ENCODE measurements at regions of chr9 and their contacts with region 1.

Region 1: DNA sequence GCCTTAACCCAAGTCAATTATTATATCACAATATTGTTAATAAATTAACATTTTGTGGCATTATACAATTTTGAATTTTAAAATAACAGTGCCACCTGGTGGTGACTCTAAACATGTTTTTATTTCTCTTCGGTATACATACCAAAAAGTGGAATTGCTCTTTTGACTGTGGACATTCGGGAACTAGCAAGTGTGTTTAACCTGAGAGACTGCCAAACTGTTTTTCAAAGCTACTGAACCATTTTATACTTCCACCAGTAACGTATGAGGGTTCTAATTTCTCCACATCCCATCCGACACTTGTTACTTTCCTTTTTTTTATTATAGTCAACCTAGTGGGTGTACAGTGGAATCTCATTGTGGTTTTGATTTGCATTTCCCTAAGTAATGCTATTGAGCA is 18.3 kb upstream of the HSDL2 start:
- H3K4me3 ChIP-seq: no peak overlapping the region
- H3K27ac ChIP-seq: no peak overlapping the region
- H3K4me1 ChIP-seq: no peaks in the 10 kb centered on the region
- CTCF ChIP-seq: no peak

Region 2: DNA sequence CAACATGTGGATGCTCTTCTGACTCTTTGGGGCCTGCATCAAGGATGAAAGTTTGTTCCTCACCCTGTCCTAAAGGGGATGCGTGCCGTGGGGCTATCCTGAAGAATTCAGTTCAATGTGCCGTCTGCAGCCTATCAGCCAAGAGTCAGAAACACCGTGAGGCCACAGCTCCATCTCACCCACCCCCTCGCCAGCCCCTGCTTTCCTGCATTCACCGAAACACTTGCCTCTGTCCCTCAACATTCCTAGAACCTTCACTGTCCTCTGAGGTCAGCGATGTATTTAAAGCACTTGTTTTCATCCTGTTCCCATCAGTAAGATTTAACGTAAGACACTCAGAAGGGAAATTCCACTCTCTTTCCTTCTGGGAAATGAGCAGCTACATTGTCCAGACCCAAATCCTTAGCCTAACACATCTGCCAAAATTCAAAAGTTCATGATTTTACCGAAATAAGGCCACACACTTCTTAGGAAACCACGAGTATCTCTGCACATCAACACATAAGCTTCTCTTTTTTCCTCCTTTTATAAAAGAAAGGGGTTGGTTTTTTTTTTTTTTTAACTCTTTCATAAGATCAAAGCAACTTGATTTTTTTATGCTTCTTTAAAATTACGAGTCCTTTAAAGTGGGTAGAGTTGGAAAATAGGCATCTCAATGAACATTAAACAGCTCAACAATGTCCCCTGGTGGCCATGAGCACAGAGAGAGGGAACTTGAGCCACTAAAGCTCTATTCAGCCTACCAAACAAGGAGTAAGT is 287.2 kb before region 1 on chr9:
- CTCF ChIA-PET with region 1: interaction called, 23 read pairs
- POLR2A ChIA-PET with region 1: no interaction called
- H3K4me3 ChIP-seq: no peak overlapping the region
- H3K27ac ChIP-seq: no peak overlapping the region
- H3K4me1 ChIP-seq: no peaks in the 10 kb centered on the region
- CTCF ChIP-seq: peak; percentile 34; the same call in 1 of the 2 replicates

Region 3: DNA sequence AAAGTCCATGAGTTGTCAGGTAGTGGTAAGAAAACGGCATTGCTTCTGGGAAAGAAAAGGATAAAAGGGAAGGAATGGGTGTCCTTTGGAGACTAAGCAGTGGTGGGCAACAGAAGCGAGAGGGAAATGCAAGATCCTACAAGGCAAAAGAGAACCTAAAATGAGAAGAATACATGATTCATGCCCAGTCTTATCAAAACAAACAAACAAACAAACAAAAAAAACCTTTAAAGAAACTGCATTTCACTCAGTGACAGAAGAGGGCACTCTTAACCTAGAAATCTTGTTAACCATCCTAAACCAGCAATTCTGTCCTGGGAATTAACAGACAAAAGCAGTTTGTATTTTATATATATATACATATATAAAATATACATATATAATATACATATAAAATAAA is 275.0 kb before region 1 on chr9:
- CTCF ChIA-PET with region 1: interaction called, 17 read pairs
- POLR2A ChIA-PET with region 1: no interaction called
- H3K4me3 ChIP-seq: no peak overlapping the region
- H3K27ac ChIP-seq: no peak overlapping the region
- H3K4me1 ChIP-seq: no peaks in the 10 kb centered on the region
- CTCF ChIP-seq: no peak

Region 4: DNA sequence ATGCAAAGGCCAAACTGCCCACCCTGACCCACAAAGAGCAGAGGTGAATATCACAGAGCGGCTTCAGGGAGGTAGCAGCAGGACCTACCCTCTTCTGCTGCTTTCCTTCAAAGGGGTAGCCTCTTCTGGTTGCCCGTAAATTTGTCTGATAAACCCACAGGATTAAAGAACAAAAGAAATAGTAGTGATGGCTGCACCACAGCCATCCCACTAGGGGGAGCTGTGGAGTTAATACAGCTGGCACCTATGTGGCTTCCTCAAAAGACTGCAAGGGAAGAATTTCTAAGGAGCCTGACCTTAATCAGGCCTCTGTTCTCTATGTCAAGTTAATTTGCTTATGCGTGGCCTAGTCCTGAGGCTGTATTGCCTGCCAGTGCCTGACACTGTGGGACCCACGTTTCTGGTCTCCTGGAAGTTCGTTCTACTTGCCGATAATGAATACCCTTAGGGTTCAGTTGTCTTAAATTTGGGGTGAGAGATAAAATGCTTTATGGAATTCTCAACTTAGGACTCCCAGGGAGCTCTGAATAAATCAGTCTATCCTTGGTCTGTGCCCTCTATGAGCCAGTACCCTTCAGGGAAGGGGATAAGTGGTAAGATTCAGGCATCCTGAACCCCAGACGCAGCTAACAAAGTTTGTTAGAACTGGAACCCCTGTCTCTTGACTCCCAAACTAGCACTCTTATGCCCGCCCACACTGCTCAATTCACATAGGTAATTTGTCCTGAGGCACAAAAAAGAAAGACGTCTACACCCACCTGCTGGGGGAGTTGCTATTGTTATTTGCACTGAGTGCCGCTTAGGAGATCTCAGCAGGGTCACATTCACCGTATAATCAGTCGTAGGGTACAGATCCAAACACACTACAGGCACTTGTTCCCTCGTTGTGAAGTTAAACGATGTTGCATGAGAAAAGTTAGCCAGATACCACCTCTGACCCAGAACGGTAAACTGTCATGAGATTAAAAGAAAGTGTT is 263.6 kb before region 1 on chr9:
- CTCF ChIA-PET with region 1: interaction called, 53 read pairs
- POLR2A ChIA-PET with region 1: no interaction called
- H3K4me3 ChIP-seq: no peak overlapping the region
- H3K27ac ChIP-seq: no peak overlapping the region
- H3K4me1 ChIP-seq: no peaks in the 10 kb centered on the region
- CTCF ChIP-seq: 0 out of 2 replicates have a peak, but pooled peaks have one; percentile 11

Region 5: GRCh38 chr9:112112941-112113681 is 248.5 kb before region 1 on chr9:
- CTCF ChIA-PET with region 1: interaction called, 40 read pairs
- POLR2A ChIA-PET with region 1: no interaction called
- H3K4me3 ChIP-seq: no peak overlapping the region
- H3K27ac ChIP-seq: no peak overlapping the region
- H3K4me1 ChIP-seq: peaks cover 5% of the 10 kb centered on the region; the same call in 1 of the 2 replicates
- CTCF ChIP-seq: 0 out of 2 replicates have a peak, but pooled peaks have one; percentile 21

Region 6: DNA sequence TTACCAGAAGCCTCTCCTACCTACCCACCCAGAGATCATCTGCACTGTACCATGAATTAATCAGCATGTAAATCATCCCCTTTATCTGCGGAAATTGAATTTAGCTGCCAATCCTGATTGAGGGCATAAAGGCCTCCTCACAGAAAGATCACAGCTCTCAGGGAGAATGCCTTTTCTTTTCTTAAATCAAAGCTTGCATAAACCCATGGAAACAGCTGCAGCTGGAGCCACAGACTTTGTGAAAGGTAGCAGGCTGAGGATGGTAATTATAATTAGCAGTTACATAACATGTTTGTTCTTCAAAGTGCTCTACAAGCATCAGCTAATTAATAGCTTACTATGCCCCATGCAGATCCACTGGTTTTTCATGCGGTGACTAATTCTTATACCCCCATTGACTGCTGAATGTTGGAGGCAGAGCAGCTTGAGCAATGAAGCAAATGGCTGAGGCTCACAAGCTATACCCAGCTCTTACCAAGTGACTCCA is 241.1 kb before region 1 on chr9:
- CTCF ChIA-PET with region 1: interaction called, 12 read pairs
- POLR2A ChIA-PET with region 1: no interaction called
- H3K4me3 ChIP-seq: no peak overlapping the region
- H3K27ac ChIP-seq: no peak overlapping the region
- H3K4me1 ChIP-seq: no peaks in the 10 kb centered on the region
- CTCF ChIP-seq: no peak

Region 7: DNA sequence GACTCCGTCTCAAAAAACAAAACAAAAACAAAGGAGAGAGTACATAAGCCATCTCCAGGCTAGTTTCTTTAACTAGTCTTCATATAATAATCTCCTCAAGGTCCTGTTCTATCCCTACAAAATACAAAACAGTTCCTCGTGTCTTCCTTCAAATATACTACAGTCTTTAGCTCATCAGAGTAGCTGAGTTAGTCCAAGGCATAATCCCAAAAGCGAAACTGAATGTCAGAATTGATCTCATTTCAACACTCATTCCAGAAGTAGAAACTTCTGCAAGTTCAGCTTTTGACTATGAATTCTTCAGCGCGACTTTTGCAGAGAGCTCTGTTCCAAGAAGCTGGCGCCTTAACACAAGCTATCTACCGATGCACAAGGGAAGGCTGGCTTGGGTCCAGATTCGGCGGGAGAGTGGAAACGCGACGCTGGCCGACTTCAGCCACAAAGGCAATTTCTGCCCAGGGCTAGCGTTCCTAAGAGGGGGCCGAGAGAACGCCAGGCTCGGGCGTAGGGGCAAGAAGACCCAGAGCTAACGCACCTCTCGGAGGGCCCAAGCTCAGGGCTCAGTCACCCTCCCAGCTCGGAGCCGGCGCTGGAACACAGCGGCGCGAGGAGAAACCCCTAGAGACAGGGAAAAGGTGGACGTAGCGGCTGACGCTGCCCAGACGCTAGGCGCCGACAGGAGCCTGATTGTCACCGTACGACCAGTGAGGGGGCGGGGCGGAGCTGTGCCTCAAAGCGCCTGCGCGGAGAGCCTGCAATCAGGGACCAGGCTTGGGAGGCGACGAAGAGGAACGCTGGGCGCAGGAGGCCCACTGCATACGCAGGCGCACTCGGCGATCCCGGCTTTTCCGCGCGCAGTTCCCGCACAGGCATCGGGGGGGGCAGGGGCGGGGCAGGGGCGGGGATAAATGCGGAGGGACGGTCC is 17.8 kb after region 1 on chr9:
- CTCF ChIA-PET with region 1: interaction called, 25 read pairs
- POLR2A ChIA-PET with region 1: interaction called, 12 read pairs
- H3K4me3 ChIP-seq: peak overlapping the region; percentile 89
- H3K27ac ChIP-seq: peak overlapping the region; percentile 95
- H3K4me1 ChIP-seq: no peaks in the 10 kb centered on the region
- CTCF ChIP-seq: no peak